ENCODE measurements at regions of chr2 and their contacts with region 1.

Region 1: DNA sequence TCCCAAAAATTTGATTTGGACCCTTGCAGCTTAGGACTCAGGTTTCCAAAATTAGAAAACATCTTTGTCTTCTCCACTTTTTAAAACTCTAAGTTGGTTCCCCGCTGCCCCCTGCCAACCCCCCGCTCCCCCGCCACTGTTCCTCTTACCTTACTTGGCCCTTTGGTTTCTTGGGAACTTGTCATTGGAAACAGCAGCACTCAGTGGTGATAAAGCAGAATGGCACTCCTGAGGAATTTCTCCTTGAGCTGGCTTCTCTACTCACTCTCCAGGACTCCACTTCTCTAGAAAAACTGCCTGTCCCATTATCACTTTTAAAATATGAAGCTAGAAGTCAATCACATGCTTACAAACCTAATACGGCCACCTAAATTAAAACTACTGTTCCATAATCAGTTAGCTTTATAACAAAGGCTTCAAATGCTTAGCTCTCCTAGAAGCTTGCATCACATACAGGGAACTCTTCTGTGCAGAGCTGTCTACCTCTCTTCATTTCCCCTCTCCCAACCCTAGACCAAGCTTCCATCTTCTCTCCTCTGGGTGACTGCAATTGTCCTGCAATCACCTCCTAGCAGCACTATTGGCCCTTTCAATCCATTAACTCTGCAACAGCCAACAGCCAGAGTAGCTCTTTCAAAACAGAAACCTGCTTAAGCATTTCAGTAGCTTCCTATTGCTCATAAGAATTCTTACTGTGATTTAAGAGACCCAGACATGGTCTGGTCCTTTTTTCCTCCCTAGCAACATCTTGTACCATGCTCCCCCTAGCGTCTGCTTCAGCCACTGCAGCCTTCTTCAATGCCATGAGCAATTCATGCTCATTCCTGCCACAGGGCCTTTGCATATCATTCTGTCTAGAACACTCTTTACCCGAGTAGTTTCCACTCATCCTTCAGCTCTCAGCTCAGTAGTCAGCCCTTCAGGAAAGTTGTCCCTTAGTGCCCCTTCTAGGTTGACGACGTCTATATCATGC is 15.2 kb upstream of the PLEKHM3 start:
- DNase-seq: peak; percentile 38
- H3K4me3 ChIP-seq: no peak overlapping the region
- H3K27ac ChIP-seq: no peak overlapping the region
- H3K27me3 ChIP-seq: no peaks in the 10 kb centered on the region
- CTCF ChIP-seq: peak; percentile 89

Region 2: DNA sequence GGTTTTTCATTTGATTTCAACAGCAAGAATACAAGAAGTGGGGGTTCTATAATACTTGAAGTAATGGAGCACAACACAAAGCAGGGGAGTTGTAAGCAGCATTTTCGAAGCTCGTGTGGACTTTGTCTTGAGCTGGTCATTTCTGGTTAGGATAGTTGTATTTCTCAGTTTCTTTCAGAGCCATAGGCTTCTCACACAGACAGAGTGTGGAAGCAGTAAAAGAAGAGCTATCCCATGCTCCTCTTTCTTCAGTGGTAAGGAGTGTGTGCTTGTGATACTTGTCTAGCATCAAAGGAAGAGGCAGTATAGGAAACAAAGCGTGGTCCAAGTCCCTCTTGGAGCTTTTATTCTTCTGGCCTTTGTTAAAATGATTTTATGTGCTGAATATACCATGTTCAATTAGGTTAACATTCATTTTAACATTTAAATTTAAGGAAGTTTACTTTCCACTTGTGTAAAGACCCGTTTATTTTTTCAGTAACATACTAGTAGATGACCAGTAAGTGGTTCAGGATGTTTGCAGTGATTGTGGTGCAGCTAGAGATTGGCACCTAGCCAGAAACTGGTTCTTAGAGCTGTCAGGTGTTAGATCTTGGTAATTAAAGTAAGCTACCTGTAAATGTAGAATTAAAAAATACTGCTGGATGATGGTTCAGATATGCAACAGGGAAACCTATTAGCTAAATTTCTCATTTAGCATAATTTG is 314.5 kb before region 1 on chr2:
- CTCF ChIA-PET with region 1: interaction called, 12 read pairs
- POLR2A ChIA-PET with region 1: no interaction called
- DNase-seq: no peak
- H3K4me3 ChIP-seq: no peak overlapping the region
- H3K27ac ChIP-seq: no peak overlapping the region
- H3K27me3 ChIP-seq: no peaks in the 10 kb centered on the region
- CTCF ChIP-seq: no peak

Region 3: DNA sequence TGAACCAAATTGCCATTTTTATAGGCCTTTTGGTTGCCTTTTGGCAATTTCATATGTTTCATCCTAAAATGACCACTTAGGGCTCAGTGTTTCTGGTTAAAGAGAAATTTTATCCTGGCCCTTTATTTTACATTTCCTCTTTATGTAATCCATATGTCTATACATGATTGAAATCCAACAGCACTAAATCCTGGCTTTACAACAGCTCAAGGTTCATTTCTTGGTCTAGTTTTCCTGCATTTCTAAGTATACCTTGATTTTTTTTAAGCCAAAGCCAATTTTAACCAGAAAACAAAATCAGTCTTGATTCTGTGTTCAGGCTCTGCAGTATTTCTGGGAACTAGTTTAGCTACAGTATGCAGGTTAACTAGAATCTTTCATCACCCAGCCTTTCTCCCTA is 282.5 kb before region 1 on chr2:
- CTCF ChIA-PET with region 1: interaction called, 12 read pairs
- POLR2A ChIA-PET with region 1: no interaction called
- DNase-seq: no peak
- H3K4me3 ChIP-seq: no peak overlapping the region
- H3K27ac ChIP-seq: no peak overlapping the region
- H3K27me3 ChIP-seq: no peaks in the 10 kb centered on the region
- CTCF ChIP-seq: no peak

Region 4: GRCh38 chr2:207869784-207870778 is 170.4 kb before region 1 on chr2:
- CTCF ChIA-PET with region 1: interaction called, 12 read pairs
- POLR2A ChIA-PET with region 1: no interaction called
- DNase-seq: peak; percentile 39
- H3K4me3 ChIP-seq: no peak overlapping the region
- H3K27ac ChIP-seq: peak overlapping the region; percentile 63
- H3K27me3 ChIP-seq: no peaks in the 10 kb centered on the region
- CTCF ChIP-seq: no peak

Region 5: DNA sequence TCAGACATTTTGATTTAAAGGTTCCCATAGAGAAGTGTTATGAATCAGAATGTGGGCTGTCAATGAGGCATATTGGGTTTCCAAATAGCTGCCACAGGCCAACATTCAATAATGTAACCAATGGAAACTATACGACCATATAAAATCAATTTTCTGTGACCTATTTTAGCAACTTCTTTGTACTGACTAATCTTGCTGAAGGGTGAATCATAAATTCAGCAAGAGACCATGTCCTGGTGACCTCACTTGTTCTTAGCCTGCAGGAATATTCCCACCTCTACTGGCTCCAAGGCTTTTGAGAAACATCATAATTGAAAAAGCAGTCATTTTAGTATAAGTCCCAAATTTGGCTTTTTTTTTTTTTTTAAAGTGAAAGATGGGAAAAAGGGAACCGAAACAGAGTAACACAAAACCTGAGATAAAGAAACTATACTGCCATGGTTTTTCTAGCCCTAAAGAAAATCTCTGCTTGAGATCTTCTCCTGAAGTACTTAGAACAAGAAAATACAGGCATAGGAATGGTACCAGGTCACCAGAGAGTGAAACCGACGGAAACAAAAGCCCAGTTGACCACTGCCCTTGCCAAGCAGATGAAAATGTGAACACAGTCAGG is 47.2 kb before region 1 on chr2:
- CTCF ChIA-PET with region 1: interaction called, 20 read pairs
- POLR2A ChIA-PET with region 1: no interaction called
- DNase-seq: no peak
- H3K4me3 ChIP-seq: no peak overlapping the region
- H3K27ac ChIP-seq: no peak overlapping the region
- H3K27me3 ChIP-seq: no peaks in the 10 kb centered on the region
- CTCF ChIP-seq: no peak

Region 6: DNA sequence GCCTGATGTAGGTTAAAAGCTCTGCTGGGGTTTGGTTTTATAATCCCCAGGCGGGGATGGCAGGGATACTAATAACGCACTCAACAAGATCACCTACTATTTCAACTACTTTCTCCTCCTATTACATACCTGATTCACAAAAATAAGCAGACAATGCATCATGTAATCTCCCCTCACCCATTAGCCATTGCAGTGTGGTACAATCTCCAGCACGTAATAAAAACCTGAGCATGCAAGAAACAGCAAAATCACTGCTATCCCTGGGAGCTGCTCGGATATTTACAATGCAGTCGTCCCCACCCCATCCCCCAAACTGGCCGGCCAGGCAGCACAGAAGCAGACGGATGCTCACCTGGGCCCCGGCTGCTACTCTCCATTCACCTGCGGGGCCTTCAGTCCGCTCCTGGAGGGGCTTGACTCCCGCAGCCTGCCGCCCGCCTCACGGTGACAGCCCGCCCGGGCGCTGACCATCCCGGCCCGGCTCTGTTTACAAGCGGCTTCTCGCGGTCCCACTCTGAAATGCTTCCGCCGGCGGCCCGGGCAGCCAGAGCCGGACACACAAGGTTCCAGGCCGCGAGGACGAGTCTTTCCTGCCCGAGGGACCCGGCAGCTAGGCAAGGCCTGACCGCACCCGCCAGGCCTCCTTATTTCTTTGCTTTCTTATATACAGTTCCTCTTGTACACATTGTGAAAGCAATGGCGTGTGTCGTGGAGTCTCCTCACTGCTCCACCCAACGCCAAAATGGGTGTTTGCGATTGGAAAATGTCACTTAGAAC is 15.3 kb before region 1 on chr2 and contains the start of gene PLEKHM3:
- CTCF ChIA-PET with region 1: interaction called, 65 read pairs
- POLR2A ChIA-PET with region 1: interaction called, 7 read pairs
- DNase-seq: peak; percentile 75
- H3K4me3 ChIP-seq: peak within 1 kb of the TSS; percentile 94
- H3K27ac ChIP-seq: peak within 1 kb of the TSS; percentile 73
- H3K27me3 ChIP-seq: no peaks in the 10 kb centered on the region
- CTCF ChIP-seq: no peak
- polyA plus RNA-seq, gene PLEKHM3: 5.3 and 7.0 TPM in 2 replicates

Region 7: DNA sequence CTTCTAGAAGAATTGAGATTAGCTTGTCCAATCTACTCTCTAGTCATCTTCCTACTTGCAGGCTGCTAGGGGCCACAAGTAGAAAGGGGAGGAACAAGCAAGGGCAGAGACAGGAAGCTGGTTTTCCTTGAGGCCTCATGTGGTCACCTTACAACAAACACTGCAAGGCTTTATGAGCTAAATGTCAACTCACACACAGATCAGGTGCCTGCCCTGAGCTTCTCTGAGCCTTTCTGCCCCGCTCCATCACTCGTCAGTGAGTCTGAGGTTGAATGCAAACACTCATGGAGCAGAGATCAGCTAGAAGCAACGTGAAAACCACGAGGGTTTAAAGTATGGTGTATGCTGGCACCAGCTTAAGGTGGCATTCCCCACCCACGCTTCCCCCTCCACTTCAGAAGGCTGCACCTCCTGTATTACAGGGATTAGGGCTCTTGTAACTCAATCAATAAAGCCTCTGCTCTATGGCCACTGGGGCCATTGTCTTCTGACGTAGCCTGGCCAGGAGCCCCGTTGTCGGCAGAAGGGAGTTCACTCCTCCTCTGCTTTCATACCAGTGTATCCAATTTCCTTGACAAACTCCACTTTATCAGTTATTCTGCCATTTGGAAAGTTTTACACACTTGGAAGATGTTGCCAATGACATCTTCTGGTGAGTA is 94.6 kb after region 1 on chr2:
- CTCF ChIA-PET with region 1: no interaction called
- POLR2A ChIA-PET with region 1: no interaction called
- DNase-seq: no peak
- H3K4me3 ChIP-seq: no peak overlapping the region
- H3K27ac ChIP-seq: no peak overlapping the region
- H3K27me3 ChIP-seq: peaks cover 5% of the 10 kb centered on the region
- CTCF ChIP-seq: no peak